ENCODE measurements at regions of chr7 and their contacts with region 1.

Region 1: DNA sequence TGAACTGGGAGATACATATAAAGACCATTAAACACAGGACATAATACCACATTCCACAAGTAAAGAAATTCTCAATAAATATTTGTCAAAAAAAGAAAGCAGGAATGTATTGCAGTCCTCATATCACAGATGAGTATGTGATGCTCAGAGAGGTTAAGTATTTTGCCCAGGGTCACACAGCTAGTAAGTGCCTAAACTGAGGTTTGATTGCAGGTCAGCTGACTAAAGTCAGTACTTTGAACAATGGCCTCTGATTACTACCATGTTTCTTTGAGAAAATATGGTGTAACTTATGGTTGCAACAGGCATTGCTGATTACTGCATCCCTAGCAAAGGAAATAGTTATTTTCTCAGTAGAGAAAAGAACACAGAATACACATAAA is 267.1 kb downstream of the ELMO1 start:
- DNase-seq: no peak
- H3K4me3 ChIP-seq: no peak overlapping the region
- H3K27ac ChIP-seq: no peak overlapping the region
- H3K4me1 ChIP-seq: peaks cover 0 to 6% (median 0%) of the 10 kb centered on the region in 4 donors
- H3K27me3 ChIP-seq: no peaks in the 10 kb centered on the region
- CTCF ChIP-seq: no peak
- EP300 ChIP-seq: no peak
- POLR2A ChIP-seq: no peak

Region 2: GRCh38 chr7:36967387-36967786 is 214.2 kb before region 1 on chr7:
- intact Hi-C with region 1: loop called (anchors 1 kb)
- DNase-seq: peak; percentile 83
- H3K4me3 ChIP-seq: no peak overlapping the region
- H3K27ac ChIP-seq: peak overlapping the region in 1 of 4 donors; percentile 39
- H3K4me1 ChIP-seq: peaks cover 0 to 10% (median 4%) of the 10 kb centered on the region in 4 donors
- H3K27me3 ChIP-seq: no peaks in the 10 kb centered on the region
- CTCF ChIP-seq: peak in 3 of 4 experiments; percentile 64 to 83 (median 76)
- EP300 ChIP-seq: no peak
- POLR2A ChIP-seq: no peak

Region 3: GRCh38 chr7:36986429-36987362 is 194.8 kb before region 1 on chr7:
- intact Hi-C with region 1: loop called (anchors 5 kb)
- DNase-seq: no peak
- H3K4me3 ChIP-seq: no peak overlapping the region
- H3K27ac ChIP-seq: no peak overlapping the region
- H3K4me1 ChIP-seq: peaks cover 0 to 15% (median 14%) of the 10 kb centered on the region in 4 donors
- H3K27me3 ChIP-seq: peaks cover 0 to 7% (median 0%) of the 10 kb centered on the region in 3 donors
- CTCF ChIP-seq: peak in 3 of 4 experiments; percentile 53 to 79 (median 63)
- EP300 ChIP-seq: no peak
- POLR2A ChIP-seq: no peak

Region 4: DNA sequence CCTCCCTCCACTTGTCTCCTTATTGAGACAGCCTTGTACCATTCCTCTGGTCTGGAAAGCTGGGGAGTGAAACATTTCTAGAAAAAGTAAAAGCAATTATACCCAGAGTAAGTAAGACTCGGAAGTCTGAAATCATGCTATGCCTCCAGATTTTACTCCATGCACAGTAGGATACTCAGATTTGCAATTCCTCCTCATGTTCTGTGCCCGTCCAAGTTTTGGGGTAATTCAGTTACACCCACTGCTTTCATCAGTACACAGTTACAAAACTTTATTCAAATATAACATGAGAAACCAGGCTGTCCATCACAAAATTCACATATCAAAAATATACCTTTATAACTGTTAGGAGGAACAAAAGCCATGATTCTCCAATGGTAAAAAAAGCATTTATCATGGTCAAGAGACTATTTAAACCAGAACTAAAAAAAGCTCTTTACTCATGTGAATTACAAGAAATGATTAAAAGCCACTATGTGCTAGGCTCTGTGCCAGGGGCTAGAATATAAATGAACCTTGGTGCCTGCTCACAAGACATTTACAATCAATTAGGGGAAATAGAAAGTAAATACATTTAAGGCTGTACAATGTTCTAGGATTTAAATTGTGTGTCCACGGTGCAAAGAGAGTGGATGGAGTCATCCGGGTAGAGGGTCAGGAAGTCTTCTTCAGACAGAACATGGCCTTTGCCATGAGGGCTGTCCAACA is 53.1 kb before region 1 on chr7:
- intact Hi-C with region 1: no loop called
- DNase-seq: no peak
- H3K4me3 ChIP-seq: no peak overlapping the region
- H3K27ac ChIP-seq: peak overlapping the region in 2 of 4 donors; percentile 41 to 53
- H3K4me1 ChIP-seq: peaks cover 0 to 17% (median 8%) of the 10 kb centered on the region in 4 donors
- H3K27me3 ChIP-seq: no peaks in the 10 kb centered on the region
- CTCF ChIP-seq: no peak
- EP300 ChIP-seq: peak in 1 of 4 donors; percentile 43
- POLR2A ChIP-seq: no peak